HepG2 (cell line): ENCODE measurements at regions of chr4 and their contacts with region 1.

Region 1: DNA sequence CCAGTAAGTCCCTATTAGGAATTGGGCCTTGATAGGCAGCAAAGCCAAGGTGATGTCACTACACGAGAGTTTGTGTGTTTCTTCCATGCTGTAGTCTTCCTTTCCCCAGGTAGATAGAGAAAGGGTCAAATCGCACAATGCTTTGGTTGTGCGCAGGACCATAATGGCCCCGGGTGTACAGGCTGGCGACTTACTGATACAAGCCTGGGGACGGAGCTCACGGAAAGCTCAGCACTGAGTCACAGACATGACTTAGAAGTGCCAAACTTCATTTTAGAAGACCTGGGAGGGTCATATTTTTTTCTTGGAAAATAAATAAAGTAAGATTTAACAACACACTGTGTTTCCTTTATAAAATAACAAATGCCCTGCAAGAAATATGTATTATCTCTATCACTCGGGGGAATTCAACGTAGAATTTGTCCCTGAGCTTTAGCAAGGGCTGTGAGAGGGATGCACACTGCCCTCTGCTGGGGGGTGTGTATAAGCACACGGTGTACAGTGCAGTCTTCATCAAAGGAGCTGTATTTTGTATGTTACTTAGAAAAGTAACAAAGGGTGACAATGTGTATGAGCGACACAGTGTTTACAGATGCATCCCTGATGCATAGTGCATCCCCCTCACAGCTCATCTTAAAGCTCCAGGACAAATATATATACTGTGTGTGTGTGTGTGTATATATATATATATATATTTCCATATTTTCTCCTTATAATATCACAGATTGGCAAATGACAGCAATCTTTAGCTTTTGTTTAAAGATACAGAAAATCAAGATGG is 254.5 kb upstream of the VEGFC start:
- DNase-seq: peak; percentile 50
- ATAC-seq: peak; percentile 97
- H3K4me3 ChIP-seq: no peak overlapping the region
- H3K27ac ChIP-seq: no peak overlapping the region
- H3K4me1 ChIP-seq: no peaks in the 10 kb centered on the region
- H3K27me3 ChIP-seq: no peaks in the 10 kb centered on the region
- CTCF ChIP-seq: peak; percentile 74
- EP300 ChIP-seq: no peak
- POLR2A ChIP-seq: no peak
- RAD21 ChIP-seq: peak; percentile 22; the same call in 1 of the 2 replicates

Region 2: DNA sequence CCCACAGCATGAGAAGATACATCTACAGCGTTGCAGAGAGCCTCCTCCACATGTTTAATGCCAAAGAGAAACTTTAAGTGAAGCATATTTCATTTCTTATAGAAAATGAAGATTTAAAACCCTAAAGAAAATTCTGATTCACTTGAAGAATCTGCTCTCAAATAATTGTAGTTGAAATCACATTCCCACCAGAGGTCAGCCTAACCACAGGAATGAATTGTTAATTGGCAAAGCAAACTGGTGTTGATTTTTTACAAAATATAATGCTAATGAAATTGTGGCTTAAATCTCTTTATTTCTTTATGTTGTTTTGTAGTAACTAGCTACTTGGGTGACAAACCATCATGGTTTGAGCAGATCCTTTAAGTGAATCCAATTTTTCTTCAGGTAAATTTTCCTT is 1012.8 kb before region 1 on chr4:
- CTCF ChIA-PET with region 1: no interaction called
- POLR2A ChIA-PET with region 1: no interaction called
- in situ Hi-C with region 1: no loop called
- intact Hi-C with region 1: loop called (anchors 10 kb)
- DNase-seq: no peak
- ATAC-seq: no peak
- H3K4me3 ChIP-seq: no peak overlapping the region
- H3K27ac ChIP-seq: no peak overlapping the region
- H3K4me1 ChIP-seq: no peaks in the 10 kb centered on the region
- H3K27me3 ChIP-seq: no peaks in the 10 kb centered on the region
- CTCF ChIP-seq: peak; percentile 35
- EP300 ChIP-seq: no peak
- POLR2A ChIP-seq: no peak
- RAD21 ChIP-seq: no peak

Region 3: GRCh38 chr4:176377780-176378179 is 669.5 kb before region 1 on chr4:
- CTCF ChIA-PET with region 1: interaction called, 9 read pairs
- POLR2A ChIA-PET with region 1: no interaction called
- in situ Hi-C with region 1: loop called (anchors 10 kb)
- intact Hi-C with region 1: loop called (anchors 1 kb)
- DNase-seq: no peak
- ATAC-seq: peak; percentile 45; the same call in 2 of the 3 replicates
- H3K4me3 ChIP-seq: no peak overlapping the region
- H3K27ac ChIP-seq: no peak overlapping the region
- H3K4me1 ChIP-seq: 0 out of 2 replicates have a peak, but pooled peaks cover 4% of the 10 kb centered on the region
- H3K27me3 ChIP-seq: no peaks in the 10 kb centered on the region; a peak in 1 of 5 replicates
- CTCF ChIP-seq: peak; percentile 50
- EP300 ChIP-seq: no peak
- POLR2A ChIP-seq: no peak
- RAD21 ChIP-seq: no peak

Region 4: GRCh38 chr4:176383273-176384077 is 663.8 kb before region 1 on chr4:
- CTCF ChIA-PET with region 1: interaction called, 9 read pairs
- POLR2A ChIA-PET with region 1: no interaction called
- in situ Hi-C with region 1: loop called (anchors 10 kb)
- intact Hi-C with region 1: no loop called
- DNase-seq: no peak
- ATAC-seq: no peak
- H3K4me3 ChIP-seq: no peak overlapping the region
- H3K27ac ChIP-seq: no peak overlapping the region
- H3K4me1 ChIP-seq: 0 out of 2 replicates have a peak, but pooled peaks cover 4% of the 10 kb centered on the region
- H3K27me3 ChIP-seq: peaks cover 0 to 3% of the 10 kb centered on the region in 2 experiments; a peak in 1 of 5 replicates
- CTCF ChIP-seq: no peak
- EP300 ChIP-seq: no peak
- POLR2A ChIP-seq: no peak
- RAD21 ChIP-seq: no peak

Region 5: DNA sequence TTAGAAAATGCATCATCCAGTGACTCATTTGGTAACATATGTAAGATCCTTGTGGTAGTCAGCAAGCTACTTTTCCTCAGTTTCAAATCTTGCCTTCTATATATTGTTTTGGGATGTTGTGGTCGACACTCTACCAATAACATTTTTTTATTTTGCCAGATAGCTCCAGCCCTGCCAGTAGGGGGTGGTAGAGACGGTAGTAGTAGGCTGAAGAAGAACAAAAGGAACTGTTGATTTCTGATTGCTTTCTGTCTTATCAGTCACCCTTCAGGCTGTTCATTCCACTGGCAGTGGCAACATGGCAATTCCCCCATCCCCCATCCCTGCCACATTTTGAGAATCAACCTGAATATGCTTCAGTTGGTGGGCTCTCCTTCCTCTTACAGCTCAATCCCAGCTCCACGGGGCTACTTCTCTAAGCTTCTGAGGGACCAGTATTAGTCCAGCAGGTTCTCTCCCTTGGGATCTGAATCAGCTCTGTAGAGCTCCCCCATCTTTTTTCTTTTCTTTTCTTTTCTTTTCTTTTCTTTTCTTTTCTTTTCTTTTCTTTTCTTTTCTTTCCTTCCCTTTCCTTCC is 83.1 kb before region 1 on chr4:
- CTCF ChIA-PET with region 1: no interaction called
- POLR2A ChIA-PET with region 1: no interaction called
- in situ Hi-C with region 1: no loop called
- intact Hi-C with region 1: loop called (anchors 1 kb)
- DNase-seq: no peak
- ATAC-seq: no peak
- H3K4me3 ChIP-seq: no peak overlapping the region
- H3K27ac ChIP-seq: no peak overlapping the region
- H3K4me1 ChIP-seq: no peaks in the 10 kb centered on the region
- H3K27me3 ChIP-seq: no peaks in the 10 kb centered on the region
- CTCF ChIP-seq: no peak
- EP300 ChIP-seq: no peak
- POLR2A ChIP-seq: no peak
- RAD21 ChIP-seq: no peak

Region 6: GRCh38 chr4:177016541-177017141 is 30.6 kb before region 1 on chr4:
- CTCF ChIA-PET with region 1: no interaction called
- POLR2A ChIA-PET with region 1: no interaction called
- in situ Hi-C with region 1: no loop called
- intact Hi-C with region 1: no loop called
- DNase-seq: no peak
- ATAC-seq: no peak
- H3K4me3 ChIP-seq: no peak overlapping the region
- H3K27ac ChIP-seq: no peak overlapping the region
- H3K4me1 ChIP-seq: no peaks in the 10 kb centered on the region
- H3K27me3 ChIP-seq: no peaks in the 10 kb centered on the region
- CTCF ChIP-seq: no peak
- EP300 ChIP-seq: no peak
- POLR2A ChIP-seq: no peak
- RAD21 ChIP-seq: no peak

Region 7: GRCh38 chr4:177163532-177163931 is 116.3 kb after region 1 on chr4:
- CTCF ChIA-PET with region 1: no interaction called
- POLR2A ChIA-PET with region 1: no interaction called
- in situ Hi-C with region 1: no loop called
- intact Hi-C with region 1: no loop called
- DNase-seq: no peak
- ATAC-seq: no peak
- H3K4me3 ChIP-seq: no peak overlapping the region
- H3K27ac ChIP-seq: no peak overlapping the region
- H3K4me1 ChIP-seq: no peaks in the 10 kb centered on the region
- H3K27me3 ChIP-seq: no peaks in the 10 kb centered on the region
- CTCF ChIP-seq: no peak
- EP300 ChIP-seq: no peak
- POLR2A ChIP-seq: no peak
- RAD21 ChIP-seq: no peak

Region 8: DNA sequence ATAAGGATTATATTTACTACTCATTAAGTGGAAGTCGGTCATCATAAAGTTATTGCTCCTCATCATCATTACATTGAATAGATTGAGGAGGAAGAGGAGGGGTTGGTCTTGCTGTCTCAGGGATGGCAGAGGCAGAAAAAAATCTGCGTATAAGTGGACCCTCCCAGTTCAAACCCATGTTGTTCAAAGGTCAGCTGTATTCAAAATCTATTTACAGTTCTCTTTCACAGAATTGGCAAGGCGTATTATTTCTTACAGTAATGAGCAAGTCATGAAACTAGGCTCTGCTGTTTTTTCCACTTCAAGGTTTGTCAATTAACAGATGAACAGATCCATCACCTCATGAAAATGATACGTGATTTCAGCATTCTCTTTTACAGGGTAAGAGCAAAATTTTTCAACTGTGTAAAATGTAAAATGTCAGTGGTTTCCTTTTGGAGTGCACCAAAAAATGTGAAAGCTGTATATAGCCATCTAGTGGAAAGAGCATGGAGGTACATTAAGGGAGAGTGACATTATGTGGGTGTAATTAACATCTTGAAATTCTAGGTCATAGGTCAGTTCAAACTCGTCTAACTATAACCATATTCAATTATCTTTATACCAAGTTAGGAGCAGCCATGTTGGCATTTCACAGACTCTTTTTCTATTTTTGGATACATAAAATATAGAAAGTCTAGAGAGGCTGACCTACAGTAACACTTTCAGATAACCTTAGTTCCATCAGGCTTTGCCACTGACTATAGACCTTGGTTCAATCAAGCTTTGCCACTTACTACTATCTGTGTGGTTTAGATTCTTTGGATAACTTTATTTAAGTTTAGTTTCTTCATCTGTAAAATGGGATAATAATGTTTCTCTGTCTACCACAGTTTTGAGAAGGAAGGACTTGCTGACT is 292.5 kb after region 1 on chr4:
- CTCF ChIA-PET with region 1: no interaction called
- POLR2A ChIA-PET with region 1: no interaction called
- in situ Hi-C with region 1: no loop called
- intact Hi-C with region 1: loop called (anchors 1 kb)
- DNase-seq: peak; percentile 29
- ATAC-seq: peak; percentile 89
- H3K4me3 ChIP-seq: no peak overlapping the region
- H3K27ac ChIP-seq: no peak overlapping the region
- H3K4me1 ChIP-seq: 0 out of 2 replicates have a peak, but pooled peaks cover 6% of the 10 kb centered on the region
- H3K27me3 ChIP-seq: no peaks in the 10 kb centered on the region
- CTCF ChIP-seq: peak; percentile 57
- EP300 ChIP-seq: no peak
- POLR2A ChIP-seq: no peak
- RAD21 ChIP-seq: peak; percentile 34; the same call in 1 of the 2 replicates

Region 9: GRCh38 chr4:177441803-177442622 is 394.8 kb after region 1 on chr4 and contains the start of gene AGA:
- CTCF ChIA-PET with region 1: no interaction called
- POLR2A ChIA-PET with region 1: no interaction called
- in situ Hi-C with region 1: no loop called
- intact Hi-C with region 1: no loop called
- DNase-seq: peak; percentile 87
- ATAC-seq: peak; percentile 98
- H3K4me3 ChIP-seq: peak within 1 kb of the TSS; percentile 80 to 94 (median 84)
- H3K27ac ChIP-seq: peak within 1 kb of the TSS; percentile 90
- H3K4me1 ChIP-seq: peaks cover 18% of the 10 kb centered on the region
- H3K27me3 ChIP-seq: no peaks in the 10 kb centered on the region
- CTCF ChIP-seq: 0 out of 2 replicates have a peak, but pooled peaks have one; percentile 9
- EP300 ChIP-seq: no peak
- POLR2A ChIP-seq: peak; percentile 89 to 90
- RAD21 ChIP-seq: peak; percentile 34; the same call in 1 of the 2 replicates
- total RNA-seq, gene AGA: 12.2 and 22.3 TPM in 2 replicates